MCF 10A (cell line): ENCODE measurements at regions of chr1 and their contacts with region 1.

Region 1: GRCh38 chr1:43358746-43359693 is at the start of gene CDC20:
- DNase-seq: peak; percentile 99
- H3K4me3 Mint-ChIP-seq: peak within 1 kb of the TSS; percentile 84
- H3K27ac Mint-ChIP-seq: peak within 1 kb of the TSS; percentile 70
- H3K4me1 Mint-ChIP-seq: peaks cover 31% of the 10 kb centered on the region
- H3K27me3 Mint-ChIP-seq: no peaks in the 10 kb centered on the region
- CTCF ChIP-seq: no peak
- total RNA-seq, gene CDC20: 123 and 204 TPM in 2 replicates

Region 2: GRCh38 chr1:43238085-43238484 is 120.9 kb before region 1 on chr1:
- CTCF ChIA-PET with region 1: interaction called, 4 read pairs
- POLR2A ChIA-PET with region 1: no interaction called
- intact Hi-C with region 1: loop called (anchors 1 kb)
- DNase-seq: peak; percentile 78
- H3K4me3 Mint-ChIP-seq: no peak overlapping the region
- H3K27ac Mint-ChIP-seq: peak overlapping the region; percentile 3
- H3K4me1 Mint-ChIP-seq: peaks cover 21% of the 10 kb centered on the region
- H3K27me3 Mint-ChIP-seq: no peaks in the 10 kb centered on the region
- CTCF ChIP-seq: peak; percentile 53

Region 3: DNA sequence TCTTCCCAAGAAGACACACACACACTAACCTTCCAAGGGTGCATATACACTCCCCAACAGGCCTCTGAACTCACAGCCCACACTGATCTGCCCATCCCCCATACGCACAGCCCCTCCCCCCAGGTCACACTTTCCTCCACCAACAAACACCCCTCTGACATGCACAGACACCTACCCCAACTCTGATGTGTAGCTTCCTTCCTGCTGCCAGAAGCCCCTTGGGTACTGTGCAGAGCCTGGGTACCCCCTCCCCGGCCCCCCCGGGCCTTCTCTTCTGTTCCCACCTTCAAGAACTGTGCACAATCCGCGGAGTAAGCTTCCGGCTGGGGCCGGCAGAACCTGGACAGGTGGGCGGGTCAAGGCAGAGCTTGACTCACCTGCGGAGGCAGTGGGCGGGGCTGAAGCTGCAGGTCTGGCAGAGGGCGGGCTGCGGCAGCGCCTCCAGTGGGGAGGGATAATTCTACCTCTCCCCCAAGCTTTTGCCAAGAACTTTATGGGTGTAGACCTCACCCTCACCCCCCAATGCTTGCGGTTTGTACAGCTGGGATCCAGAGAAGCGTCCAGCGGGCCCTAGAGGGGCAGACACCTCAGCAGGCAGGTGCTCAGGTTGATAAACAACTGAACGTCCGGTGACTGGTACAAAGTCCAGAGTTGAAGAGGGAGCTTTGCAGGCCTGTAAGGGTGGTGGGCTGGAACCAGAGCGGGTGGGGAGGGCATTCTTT is 73.6 kb before region 1 on chr1 and contains the start of gene C1orf210:
- CTCF ChIA-PET with region 1: interaction called, 5 read pairs
- POLR2A ChIA-PET with region 1: interaction called, 10 read pairs
- intact Hi-C with region 1: no loop called
- DNase-seq: peak; percentile 81
- H3K4me3 Mint-ChIP-seq: peak within 1 kb of the TSS; percentile 70
- H3K27ac Mint-ChIP-seq: no peak within 1 kb of the TSS
- H3K4me1 Mint-ChIP-seq: peaks cover 5% of the 10 kb centered on the region
- H3K27me3 Mint-ChIP-seq: no peaks in the 10 kb centered on the region
- CTCF ChIP-seq: peak; percentile 33
- total RNA-seq, gene C1orf210: 0.91 and 1.6 TPM in 2 replicates

Region 4: GRCh38 chr1:43348809-43349583 is 10.0 kb before region 1 on chr1:
- CTCF ChIA-PET with region 1: interaction called, 3 read pairs
- POLR2A ChIA-PET with region 1: interaction called, 10 read pairs
- intact Hi-C with region 1: no loop called
- DNase-seq: peak; percentile 88
- H3K4me3 Mint-ChIP-seq: peak overlapping the region; percentile 82
- H3K27ac Mint-ChIP-seq: peak overlapping the region; percentile 96
- H3K4me1 Mint-ChIP-seq: peaks cover 21% of the 10 kb centered on the region
- H3K27me3 Mint-ChIP-seq: no peaks in the 10 kb centered on the region
- CTCF ChIP-seq: no peak

Region 5: GRCh38 chr1:43373066-43373940 is 14.3 kb after region 1 on chr1:
- CTCF ChIA-PET with region 1: interaction called, 8 read pairs
- POLR2A ChIA-PET with region 1: interaction called, 41 read pairs
- intact Hi-C with region 1: no loop called
- DNase-seq: peak; percentile 89
- H3K4me3 Mint-ChIP-seq: no peak overlapping the region
- H3K27ac Mint-ChIP-seq: no peak overlapping the region
- H3K4me1 Mint-ChIP-seq: peaks cover 10% of the 10 kb centered on the region
- H3K27me3 Mint-ChIP-seq: no peaks in the 10 kb centered on the region
- CTCF ChIP-seq: no peak

Region 6: GRCh38 chr1:43389326-43390313 is 30.6 kb after region 1 on chr1 and contains the starts of genes MED8 and SZT2:
- CTCF ChIA-PET with region 1: interaction called, 3 read pairs
- POLR2A ChIA-PET with region 1: interaction called, 34 read pairs
- intact Hi-C with region 1: no loop called
- DNase-seq: peak; percentile 96
- H3K4me3 Mint-ChIP-seq: peak within 1 kb of the TSS; percentile 91
- H3K27ac Mint-ChIP-seq: peak within 1 kb of the TSS; percentile 95
- H3K4me1 Mint-ChIP-seq: peaks cover 31% of the 10 kb centered on the region
- H3K27me3 Mint-ChIP-seq: no peaks in the 10 kb centered on the region
- CTCF ChIP-seq: no peak
- total RNA-seq, gene MED8: 52.0 and 61.6 TPM in 2 replicates
- total RNA-seq, gene SZT2: 65.3 and 67.4 TPM in 2 replicates

Region 7: DNA sequence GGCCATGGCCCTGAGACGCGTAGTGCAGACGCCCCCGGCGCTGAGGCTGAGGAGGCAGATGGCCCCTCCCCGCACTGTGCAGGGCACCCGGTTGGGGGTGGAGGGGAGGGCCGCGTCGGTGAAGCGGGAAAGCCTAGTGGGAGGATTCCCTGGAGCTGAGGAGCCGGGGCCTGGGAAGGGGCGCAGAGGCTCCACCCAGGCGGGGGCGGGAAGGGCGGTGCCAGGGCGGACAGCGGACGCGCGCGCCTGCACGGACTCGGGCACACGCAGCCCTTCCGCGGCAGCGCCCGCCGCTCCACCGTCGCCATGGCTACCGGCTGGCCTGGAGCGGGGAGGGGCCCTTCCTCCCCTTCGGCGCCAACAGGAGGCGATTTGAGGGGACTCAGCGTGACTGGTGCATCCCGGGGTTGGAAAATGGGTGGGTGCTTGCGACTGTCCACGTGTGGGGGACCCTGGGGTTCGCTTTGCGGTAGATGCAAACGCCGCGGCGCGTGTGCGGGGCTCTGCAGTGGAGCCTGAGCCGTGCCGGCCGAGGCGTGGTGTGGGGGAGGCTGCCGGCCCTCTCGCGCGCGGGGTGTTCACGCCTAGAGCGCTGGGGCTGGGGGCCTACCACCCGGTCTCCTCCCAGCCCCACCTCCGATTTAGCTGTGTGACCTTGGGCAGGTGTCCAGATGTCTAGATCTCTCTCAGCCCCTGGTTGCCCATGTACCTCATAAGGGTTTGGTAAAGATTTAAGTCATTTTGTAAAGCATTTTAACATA is 206.8 kb after region 1 on chr1:
- CTCF ChIA-PET with region 1: no interaction called
- POLR2A ChIA-PET with region 1: no interaction called
- intact Hi-C with region 1: no loop called
- DNase-seq: no peak
- H3K4me3 Mint-ChIP-seq: no peak overlapping the region
- H3K27ac Mint-ChIP-seq: no peak overlapping the region
- H3K4me1 Mint-ChIP-seq: no peaks in the 10 kb centered on the region
- H3K27me3 Mint-ChIP-seq: no peaks in the 10 kb centered on the region
- CTCF ChIP-seq: no peak